ENCODE measurements at regions of chr17 and their contacts with region 1.

Region 1: DNA sequence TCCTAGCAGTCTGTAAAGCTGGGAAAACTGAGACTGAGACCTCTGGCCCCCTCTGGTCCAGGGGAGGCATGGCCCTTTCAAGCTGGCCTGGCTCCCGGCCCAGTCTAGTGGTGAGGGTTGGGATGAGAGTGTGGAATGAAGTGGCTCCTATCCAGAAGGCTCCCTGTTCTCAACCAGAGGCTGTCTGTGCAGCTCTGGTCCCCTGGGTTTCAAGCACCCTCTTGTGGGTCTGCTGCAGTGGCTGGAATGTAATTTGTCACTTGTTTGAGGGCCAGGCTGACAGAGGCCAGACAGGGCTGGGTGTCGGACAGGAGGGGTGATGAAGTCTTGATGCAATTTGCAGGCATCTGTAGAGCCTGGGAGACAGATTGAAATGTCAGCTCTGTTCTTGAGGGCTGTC is 22.1 kb upstream of the PHF12 start:
- DNase-seq: no peak
- ATAC-seq: no peak
- H3K4me3 ChIP-seq: no peak overlapping the region
- H3K27ac ChIP-seq: no peak overlapping the region
- H3K4me1 ChIP-seq: no peaks in the 10 kb centered on the region
- H3K27me3 ChIP-seq: no peaks in the 10 kb centered on the region; a peak in 1 of 4 replicates
- CTCF ChIP-seq: no peak
- EP300 ChIP-seq: no peak
- POLR2A ChIP-seq: no peak
- RAD21 ChIP-seq: no peak

Region 2: GRCh38 chr17:28960256-28961061 is 13.0 kb before region 1 on chr17:
- CTCF ChIA-PET with region 1: interaction called, 20 read pairs
- POLR2A ChIA-PET with region 1: no interaction called
- RAD21 ChIA-PET with region 1: interaction called, 3 read pairs
- SMC1A ChIA-PET with region 1: no interaction called
- in situ Hi-C with region 1: no loop called
- intact Hi-C with region 1: loop called (anchors 1 kb)
- DNase-seq: no peak
- ATAC-seq: no peak
- H3K4me3 ChIP-seq: no peak overlapping the region
- H3K27ac ChIP-seq: no peak overlapping the region
- H3K4me1 ChIP-seq: no peaks in the 10 kb centered on the region
- H3K27me3 ChIP-seq: peaks cover 0 to 2% of the 10 kb centered on the region in 2 experiments; a peak in 1 of 4 replicates
- CTCF ChIP-seq: no peak
- EP300 ChIP-seq: no peak
- POLR2A ChIP-seq: no peak
- RAD21 ChIP-seq: no peak

Region 3: GRCh38 chr17:28983286-28984230 is 10.1 kb after region 1 on chr17:
- CTCF ChIA-PET with region 1: no interaction called
- POLR2A ChIA-PET with region 1: no interaction called
- RAD21 ChIA-PET with region 1: no interaction called
- SMC1A ChIA-PET with region 1: no interaction called
- in situ Hi-C with region 1: no loop called
- intact Hi-C with region 1: no loop called
- DNase-seq: no peak
- ATAC-seq: no peak
- H3K4me3 ChIP-seq: no peak overlapping the region
- H3K27ac ChIP-seq: no peak overlapping the region
- H3K4me1 ChIP-seq: peaks cover 14% of the 10 kb centered on the region
- H3K27me3 ChIP-seq: no peaks in the 10 kb centered on the region
- CTCF ChIP-seq: no peak
- EP300 ChIP-seq: no peak
- POLR2A ChIP-seq: no peak
- RAD21 ChIP-seq: no peak

Region 4: GRCh38 chr17:29019475-29020181 is 46.2 kb after region 1 on chr17:
- CTCF ChIA-PET with region 1: no interaction called
- POLR2A ChIA-PET with region 1: no interaction called
- RAD21 ChIA-PET with region 1: no interaction called
- SMC1A ChIA-PET with region 1: no interaction called
- in situ Hi-C with region 1: no loop called
- intact Hi-C with region 1: loop called (anchors 5 kb)
- DNase-seq: no peak
- ATAC-seq: peak; percentile 40
- H3K4me3 ChIP-seq: no peak overlapping the region
- H3K27ac ChIP-seq: no peak overlapping the region
- H3K4me1 ChIP-seq: no peaks in the 10 kb centered on the region
- H3K27me3 ChIP-seq: peaks cover 2 to 6% of the 10 kb centered on the region in 2 experiments
- CTCF ChIP-seq: no peak
- EP300 ChIP-seq: no peak
- POLR2A ChIP-seq: no peak
- RAD21 ChIP-seq: no peak

Region 5: DNA sequence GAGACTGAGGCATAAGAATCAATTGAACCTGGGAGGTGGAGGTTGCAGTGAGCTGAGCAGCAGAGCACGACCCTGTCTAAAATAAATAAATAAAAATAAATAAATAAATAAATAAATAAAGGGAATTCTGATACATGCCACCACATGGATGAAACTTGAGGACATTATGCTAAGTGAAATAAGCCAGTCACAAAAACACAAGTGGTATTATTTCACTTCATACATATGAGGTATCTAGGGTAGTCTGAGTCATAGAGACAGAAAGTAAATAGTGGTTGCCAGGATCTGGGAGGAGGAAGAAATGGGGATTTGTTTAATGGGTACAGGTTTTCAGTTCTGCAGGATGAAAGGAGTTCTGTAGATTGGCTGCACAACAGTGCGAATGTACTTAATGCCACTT is 85.9 kb after region 1 on chr17:
- CTCF ChIA-PET with region 1: no interaction called
- POLR2A ChIA-PET with region 1: no interaction called
- RAD21 ChIA-PET with region 1: no interaction called
- SMC1A ChIA-PET with region 1: interaction called, 3 read pairs
- in situ Hi-C with region 1: no loop called
- intact Hi-C with region 1: loop called (anchors 10 kb)
- DNase-seq: no peak
- ATAC-seq: no peak
- H3K4me3 ChIP-seq: no peak overlapping the region
- H3K27ac ChIP-seq: no peak overlapping the region
- H3K4me1 ChIP-seq: no peaks in the 10 kb centered on the region
- H3K27me3 ChIP-seq: no peaks in the 10 kb centered on the region; a peak in 1 of 4 replicates
- CTCF ChIP-seq: no peak
- EP300 ChIP-seq: no peak
- POLR2A ChIP-seq: no peak
- RAD21 ChIP-seq: no peak

Measured in GM12878 (cell line).